CD14-positive monocyte (primary cell): ENCODE measurements at regions of chr13 and their contacts with region 1.

Region 1: DNA sequence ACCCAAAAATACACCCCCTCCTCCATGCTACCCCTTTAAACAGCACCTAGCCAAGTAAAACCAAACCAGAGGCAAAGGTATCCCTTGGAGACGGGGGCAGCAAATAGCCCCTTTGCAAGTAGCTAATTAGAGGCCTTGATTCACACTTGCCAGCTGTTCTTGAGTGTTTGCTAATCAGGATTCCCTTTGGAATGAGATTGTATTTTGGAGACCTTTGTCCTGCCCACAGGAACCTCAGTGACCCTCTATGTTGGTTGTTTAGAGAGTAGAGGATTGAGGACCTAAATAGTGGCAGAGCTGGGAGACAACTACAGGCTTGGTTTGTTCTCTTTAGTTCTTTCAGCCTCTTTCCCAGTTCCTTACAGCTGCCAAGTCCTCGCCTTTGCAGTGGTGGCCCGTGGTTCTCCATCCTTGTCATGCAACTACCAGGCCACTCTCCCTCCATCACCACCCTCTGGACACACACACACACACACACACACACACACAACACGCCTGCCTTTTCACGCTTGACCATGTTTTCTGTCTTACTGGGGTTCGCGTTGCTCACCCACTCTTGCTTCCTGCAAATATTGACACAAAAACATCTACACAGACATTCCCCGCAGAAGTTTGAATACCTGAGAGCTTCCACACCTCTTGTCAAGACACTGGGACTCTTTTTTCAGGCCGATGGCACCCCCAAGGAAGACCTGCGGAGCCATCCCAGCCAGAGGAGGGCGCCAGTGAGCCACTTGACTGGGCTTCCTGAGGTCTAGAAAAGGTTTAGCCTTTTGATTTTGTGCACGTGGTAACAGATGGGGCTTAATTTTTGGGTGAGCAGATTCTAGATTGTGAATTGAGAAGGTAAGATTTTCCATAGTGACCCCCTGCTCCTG is 80.0 kb upstream of the GPR183 start:
- DNase-seq: peak; percentile 74 to 79 (median 77)
- H3K4me3 ChIP-seq: no peak overlapping the region
- H3K4me3 Mint-ChIP-seq: no peak overlapping the region
- H3K27ac ChIP-seq: peak overlapping the region in 1 of 2 donors; percentile 28
- H3K27ac Mint-ChIP-seq: peak overlapping the region; percentile 43 to 87 (median 81)
- H3K4me1 ChIP-seq: peaks cover 6 to 9% of the 10 kb centered on the region in 2 donors
- H3K4me1 Mint-ChIP-seq: peaks cover 23% of the 10 kb centered on the region
- H3K27me3 ChIP-seq: no peaks in the 10 kb centered on the region
- H3K27me3 Mint-ChIP-seq: peaks cover 2 to 5% (median 3%) of the 10 kb centered on the region in 3 donors
- CTCF ChIP-seq: peak; percentile 91

Region 2: DNA sequence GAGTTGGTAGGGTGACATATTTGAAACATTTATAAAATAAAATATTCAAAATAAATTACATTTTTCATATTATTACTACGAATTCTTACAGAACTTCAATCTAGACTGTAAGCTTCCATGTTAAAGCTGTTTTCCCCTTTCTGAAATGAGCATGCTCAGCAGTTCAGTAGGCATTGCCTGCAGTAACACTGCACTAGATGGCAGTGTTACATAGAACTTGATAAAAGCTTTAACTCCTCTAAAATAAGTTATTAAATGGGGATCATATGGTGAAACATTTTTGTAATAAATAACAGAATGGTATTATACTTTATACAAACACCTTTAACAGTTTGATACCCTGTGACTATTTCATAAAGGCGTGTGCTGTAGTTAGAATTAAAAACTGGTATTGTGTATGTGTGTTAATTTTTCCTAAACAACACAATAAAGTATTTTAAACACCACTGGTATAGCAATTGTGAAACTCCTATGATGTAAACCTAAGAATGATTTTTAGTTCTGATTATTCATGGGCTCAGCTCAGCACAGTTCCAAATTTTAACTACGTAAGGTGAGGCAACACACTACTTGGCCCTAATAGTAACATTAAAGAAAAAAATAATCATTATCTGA is 117.4 kb before region 1 on chr13:
- intact Hi-C with region 1: loop called (anchors 5 to 10 kb)
- DNase-seq: peak; percentile 76 to 90 (median 77)
- H3K4me3 ChIP-seq: no peak overlapping the region
- H3K4me3 Mint-ChIP-seq: no peak overlapping the region
- H3K27ac ChIP-seq: peak overlapping the region; percentile 26 to 90
- H3K27ac Mint-ChIP-seq: peak overlapping the region; percentile 96 to 98 (median 97)
- H3K4me1 ChIP-seq: peaks cover 21 to 30% of the 10 kb centered on the region in 2 donors
- H3K4me1 Mint-ChIP-seq: peaks cover 39% of the 10 kb centered on the region
- H3K27me3 ChIP-seq: no peaks in the 10 kb centered on the region
- H3K27me3 Mint-ChIP-seq: peaks cover 0 to 4% (median 0%) of the 10 kb centered on the region in 3 donors
- CTCF ChIP-seq: peak; percentile 84